Activated CD4-positive, alpha-beta memory T cell treated with anti-CD3 and anti-CD28 coated beads for 36 hours (primary cell): ENCODE measurements at regions of chr6 and their contacts with region 1.

Region 1: GRCh38 chr6:100664274-100665040 is 199.7 kb upstream of the SIM1 start:
- DNase-seq: no peak
- H3K4me3 Mint-ChIP-seq: no peak overlapping the region
- H3K27ac Mint-ChIP-seq: peak overlapping the region; percentile 43
- H3K4me1 Mint-ChIP-seq: peaks cover 10% of the 10 kb centered on the region
- H3K27me3 Mint-ChIP-seq: no peaks in the 10 kb centered on the region

Region 2: GRCh38 chr6:100001915-100002388 is 662.5 kb before region 1 on chr6:
- CTCF ChIA-PET with region 1: no interaction called
- POLR2A ChIA-PET with region 1: no interaction called
- intact Hi-C with region 1: loop called (anchors 10 kb)
- DNase-seq: peak; percentile 48
- H3K4me3 Mint-ChIP-seq: no peak overlapping the region
- H3K27ac Mint-ChIP-seq: no peak overlapping the region
- H3K4me1 Mint-ChIP-seq: no peaks in the 10 kb centered on the region
- H3K27me3 Mint-ChIP-seq: peaks cover 23% of the 10 kb centered on the region

Region 3: DNA sequence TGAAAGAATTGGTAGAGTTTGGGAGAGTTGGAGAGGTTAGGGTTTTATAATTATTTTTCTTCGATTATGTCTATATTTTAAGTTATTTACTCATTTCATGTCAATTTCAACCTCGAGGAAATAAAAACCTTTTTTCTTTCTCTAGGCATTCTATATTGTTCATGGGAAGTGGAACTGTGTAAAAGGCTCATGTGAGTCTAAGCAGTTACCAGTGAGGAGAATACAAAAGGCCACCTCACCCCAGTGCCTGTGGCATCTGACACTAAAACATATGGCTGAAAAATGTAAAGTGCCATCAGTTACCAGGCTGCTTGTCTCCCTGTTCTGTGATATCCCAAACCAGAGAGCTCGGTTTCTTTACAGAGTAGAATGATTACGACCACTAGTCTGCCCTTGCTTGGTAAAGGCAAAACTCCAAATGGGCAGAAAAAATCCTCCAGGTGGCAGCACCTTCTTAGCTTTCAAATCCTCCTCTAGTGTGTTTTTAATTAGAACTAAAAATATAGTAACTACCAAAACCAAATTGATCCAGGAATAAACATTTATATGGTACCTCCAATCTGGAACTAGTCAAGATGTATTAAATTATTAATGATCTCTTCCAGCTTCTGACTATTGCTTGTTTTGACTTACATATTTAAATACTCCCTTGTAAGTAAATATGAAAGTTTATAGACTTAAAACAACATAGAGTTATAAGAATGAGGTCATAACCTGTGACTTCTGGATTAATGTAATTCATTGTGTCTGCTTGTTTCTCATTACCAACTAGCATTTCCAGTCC is 547.9 kb before region 1 on chr6:
- CTCF ChIA-PET with region 1: interaction called, 7 read pairs
- POLR2A ChIA-PET with region 1: no interaction called
- intact Hi-C with region 1: loop called (anchors 5 kb)
- DNase-seq: peak; percentile 37
- H3K4me3 Mint-ChIP-seq: no peak overlapping the region
- H3K27ac Mint-ChIP-seq: no peak overlapping the region
- H3K4me1 Mint-ChIP-seq: peaks cover 4% of the 10 kb centered on the region
- H3K27me3 Mint-ChIP-seq: peaks cover 11% of the 10 kb centered on the region

Region 4: DNA sequence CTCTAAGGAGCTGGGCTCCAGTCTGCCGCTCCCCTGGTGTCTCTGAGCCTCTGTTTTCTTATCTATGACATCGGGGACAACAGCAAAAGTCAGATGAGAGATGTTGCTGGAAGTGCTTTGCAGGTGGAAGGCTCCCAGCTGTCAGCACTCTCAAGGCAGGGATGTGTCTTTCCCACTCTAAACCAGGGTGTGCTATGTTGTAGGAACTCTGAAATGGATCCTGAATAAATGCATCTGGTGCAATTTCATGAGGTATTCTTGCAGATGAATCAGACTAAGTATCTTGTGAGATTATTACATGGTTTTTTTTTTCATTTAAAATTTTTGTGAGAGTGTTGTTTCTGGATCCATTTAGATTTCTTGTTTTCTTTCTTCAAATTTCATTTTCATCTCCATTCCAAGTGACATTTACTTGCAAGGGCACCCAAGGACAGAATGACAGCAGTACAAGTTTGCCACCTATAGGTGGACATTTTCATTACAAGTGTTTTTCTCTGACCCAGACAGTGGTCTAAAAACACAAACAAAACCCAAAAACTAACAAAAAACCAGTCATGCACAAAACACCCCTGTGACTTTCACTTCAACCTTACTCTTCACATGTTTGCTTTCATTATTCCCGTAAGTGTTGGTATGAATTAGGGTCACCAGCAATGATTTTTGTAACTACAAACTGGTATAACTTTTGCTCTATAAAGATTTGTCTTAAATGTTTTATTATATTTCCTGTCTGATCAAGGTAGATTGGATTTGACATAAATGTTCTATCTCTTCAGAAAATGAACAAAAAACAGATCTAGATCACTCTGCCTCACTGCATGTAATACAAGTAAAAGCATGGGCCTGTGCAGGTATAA is 185.1 kb before region 1 on chr6:
- CTCF ChIA-PET with region 1: interaction called, 5 read pairs
- POLR2A ChIA-PET with region 1: no interaction called
- intact Hi-C with region 1: loop called (anchors 10 kb)
- DNase-seq: no peak
- H3K4me3 Mint-ChIP-seq: no peak overlapping the region
- H3K27ac Mint-ChIP-seq: no peak overlapping the region
- H3K4me1 Mint-ChIP-seq: peaks cover 2% of the 10 kb centered on the region
- H3K27me3 Mint-ChIP-seq: peaks cover 14% of the 10 kb centered on the region

Region 5: GRCh38 chr6:100704961-100705360 is 40.5 kb after region 1 on chr6:
- CTCF ChIA-PET with region 1: no interaction called
- POLR2A ChIA-PET with region 1: no interaction called
- intact Hi-C with region 1: no loop called
- DNase-seq: no peak
- H3K4me3 Mint-ChIP-seq: no peak overlapping the region
- H3K27ac Mint-ChIP-seq: no peak overlapping the region
- H3K4me1 Mint-ChIP-seq: peaks cover 14% of the 10 kb centered on the region
- H3K27me3 Mint-ChIP-seq: no peaks in the 10 kb centered on the region

Region 6: DNA sequence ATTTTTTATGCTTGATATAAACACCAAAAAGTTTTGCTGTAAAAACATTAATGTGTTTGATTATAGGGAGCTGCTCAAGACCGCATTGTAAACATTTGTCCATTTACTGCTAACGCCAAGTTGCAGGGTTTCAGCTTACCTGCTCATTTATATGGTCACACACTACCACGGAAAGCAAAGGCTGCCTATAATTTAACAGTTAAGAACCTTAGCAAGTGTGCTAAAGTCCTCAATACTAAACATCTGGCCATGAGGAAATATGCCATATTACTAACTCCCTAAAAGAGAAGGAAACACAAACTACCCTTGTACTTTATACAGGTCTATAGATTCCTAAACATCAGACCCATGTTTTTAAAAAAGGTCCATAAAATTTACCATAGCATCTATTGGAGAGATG is 87.1 kb after region 1 on chr6:
- CTCF ChIA-PET with region 1: no interaction called
- POLR2A ChIA-PET with region 1: no interaction called
- intact Hi-C with region 1: no loop called
- DNase-seq: no peak
- H3K4me3 Mint-ChIP-seq: no peak overlapping the region
- H3K27ac Mint-ChIP-seq: no peak overlapping the region
- H3K4me1 Mint-ChIP-seq: peaks cover 2% of the 10 kb centered on the region
- H3K27me3 Mint-ChIP-seq: no peaks in the 10 kb centered on the region

Region 7: DNA sequence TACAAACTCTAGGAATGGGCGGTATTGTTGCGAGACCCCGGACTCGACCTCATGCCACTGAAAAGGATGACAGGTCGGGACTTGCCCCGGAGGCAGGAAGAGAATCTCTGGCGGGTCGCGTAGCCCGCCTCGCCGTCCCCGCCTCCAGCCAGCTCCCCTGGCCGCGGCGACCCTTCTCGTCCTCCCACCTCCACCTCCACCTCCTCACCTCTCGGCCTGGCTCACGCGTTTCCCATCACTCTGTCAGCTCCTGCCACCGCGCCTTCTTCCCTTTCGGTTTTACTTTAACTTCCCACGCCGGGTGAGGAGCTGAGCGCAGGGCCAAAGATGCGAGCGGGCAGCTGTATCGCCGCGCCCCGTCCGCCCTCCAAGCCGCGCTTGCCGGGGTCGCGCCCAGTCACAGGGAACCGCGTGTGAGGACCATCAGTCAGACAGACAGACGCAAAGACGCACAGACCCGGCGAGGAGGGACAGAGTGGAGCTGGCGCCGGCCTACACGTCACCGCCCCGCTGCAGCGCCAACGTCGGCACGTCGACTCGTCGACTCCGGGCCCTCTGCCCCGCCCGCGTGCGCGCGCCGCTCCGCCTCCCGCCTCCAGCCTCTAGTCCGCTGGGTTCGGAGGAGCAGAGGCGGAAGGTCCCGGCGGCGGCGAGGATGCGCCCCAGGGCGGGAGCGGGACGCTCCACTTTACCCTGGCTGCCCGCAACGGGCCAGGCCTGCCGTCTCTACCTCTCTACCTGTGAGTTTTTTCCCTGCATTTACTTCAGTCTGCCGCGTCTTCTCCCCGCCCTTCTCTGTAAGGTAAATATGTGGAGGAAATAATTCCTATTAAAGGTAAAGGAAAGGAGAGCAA is 216.6 kb after region 1 on chr6 and contains the start of gene ASCC3:
- CTCF ChIA-PET with region 1: no interaction called
- POLR2A ChIA-PET with region 1: no interaction called
- intact Hi-C with region 1: loop called (anchors 10 kb)
- DNase-seq: peak; percentile 95
- H3K4me3 Mint-ChIP-seq: peak within 1 kb of the TSS; percentile 100
- H3K27ac Mint-ChIP-seq: peak within 1 kb of the TSS; percentile 99
- H3K4me1 Mint-ChIP-seq: peaks cover 40% of the 10 kb centered on the region
- H3K27me3 Mint-ChIP-seq: peaks cover 3% of the 10 kb centered on the region
- total RNA-seq, gene ASCC3: 51.2 to 52.9 TPM